Transverse colon (tissue), 4 donors: ENCODE measurements at regions of chr10 and their contacts with region 1.

Region 1: GRCh38 chr10:101018600-101019439 is 12.1 kb downstream of the PDZD7 start:
- DNase-seq: peak; percentile 88
- H3K4me3 ChIP-seq: no peak overlapping the region
- H3K27ac ChIP-seq: no peak overlapping the region
- H3K4me1 ChIP-seq: peaks cover 0 to 13% (median 5%) of the 10 kb centered on the region in 4 donors
- H3K27me3 ChIP-seq: peaks cover 27% of the 10 kb centered on the region
- CTCF ChIP-seq: peak; percentile 58 to 79 (median 68)
- EP300 ChIP-seq: no peak
- POLR2A ChIP-seq: no peak

Region 2: GRCh38 chr10:100744987-100745881 is 273.6 kb before region 1 on chr10 and contains the start of gene PAX2:
- in situ Hi-C with region 1: no loop called
- intact Hi-C with region 1: no loop called
- DNase-seq: no peak
- H3K4me3 ChIP-seq: peak within 1 kb of the TSS in 2 of 4 donors; percentile 1 to 41
- H3K27ac ChIP-seq: no peak within 1 kb of the TSS
- H3K4me1 ChIP-seq: peaks cover 14 to 56% (median 36%) of the 10 kb centered on the region in 4 donors
- H3K27me3 ChIP-seq: peaks cover 100% of the 10 kb centered on the region
- CTCF ChIP-seq: no peak
- EP300 ChIP-seq: no peak
- POLR2A ChIP-seq: no peak
- total RNA-seq, gene PAX2: not detected

Region 3: GRCh38 chr10:101305320-101306241 is 286.8 kb after region 1 on chr10:
- in situ Hi-C with region 1: no loop called
- intact Hi-C with region 1: loop called (anchors 5 kb)
- DNase-seq: no peak
- H3K4me3 ChIP-seq: no peak overlapping the region
- H3K27ac ChIP-seq: no peak overlapping the region
- H3K4me1 ChIP-seq: peaks cover 0 to 3% (median 0%) of the 10 kb centered on the region in 4 donors
- H3K27me3 ChIP-seq: peaks cover 66% of the 10 kb centered on the region
- CTCF ChIP-seq: no peak
- EP300 ChIP-seq: no peak
- POLR2A ChIP-seq: no peak